Right ventricle myocardium inferior (tissue), 1 donor: ENCODE measurements at regions of chr2 and their contacts with region 1.

Region 1: GRCh38 chr2:21710031-21710430 is 586.3 kb downstream of the TDRD15 start:
- DNase-seq: peak; percentile 61
- ATAC-seq: peak; percentile 96

Region 2: DNA sequence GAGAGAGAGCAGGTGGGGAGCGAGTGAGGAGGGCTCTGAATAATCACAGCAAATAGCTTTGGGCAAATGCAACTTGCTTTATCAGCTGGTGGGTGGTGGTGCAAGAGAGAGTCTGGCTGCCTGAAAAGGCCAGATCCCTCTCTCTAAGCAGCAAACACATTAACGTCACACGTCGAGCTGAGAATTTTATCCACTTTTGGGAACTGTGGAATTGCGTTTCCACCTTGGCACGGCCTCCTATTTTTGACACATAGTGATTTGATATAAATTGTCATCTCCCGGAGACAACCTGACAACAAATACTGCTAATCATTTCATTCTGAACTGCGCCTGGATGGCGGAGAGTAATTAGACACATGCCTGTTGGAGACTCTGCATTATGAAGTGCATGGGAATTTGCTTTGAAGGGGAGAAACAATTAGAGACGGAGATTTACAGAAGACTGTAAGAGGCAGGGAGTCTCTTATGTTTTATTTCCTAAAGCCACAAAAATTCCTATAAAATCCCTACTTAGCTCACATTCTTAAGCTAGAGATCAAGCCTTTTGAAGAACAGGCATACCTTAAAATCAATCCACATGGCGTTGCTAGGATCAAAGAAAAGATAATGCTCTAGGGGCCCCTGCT is 47.9 kb after region 1 on chr2:
- intact Hi-C with region 1: loop called (anchors 5 kb)
- DNase-seq: no peak
- ATAC-seq: peak; percentile 90

Region 3: GRCh38 chr2:21800356-21800755 is 90.3 kb after region 1 on chr2:
- intact Hi-C with region 1: loop called (anchors 5 kb)
- DNase-seq: peak; percentile 9
- ATAC-seq: no peak